PC-9 (cell line): ENCODE measurements at regions of chr11 and their contacts with region 1.

Region 1: DNA sequence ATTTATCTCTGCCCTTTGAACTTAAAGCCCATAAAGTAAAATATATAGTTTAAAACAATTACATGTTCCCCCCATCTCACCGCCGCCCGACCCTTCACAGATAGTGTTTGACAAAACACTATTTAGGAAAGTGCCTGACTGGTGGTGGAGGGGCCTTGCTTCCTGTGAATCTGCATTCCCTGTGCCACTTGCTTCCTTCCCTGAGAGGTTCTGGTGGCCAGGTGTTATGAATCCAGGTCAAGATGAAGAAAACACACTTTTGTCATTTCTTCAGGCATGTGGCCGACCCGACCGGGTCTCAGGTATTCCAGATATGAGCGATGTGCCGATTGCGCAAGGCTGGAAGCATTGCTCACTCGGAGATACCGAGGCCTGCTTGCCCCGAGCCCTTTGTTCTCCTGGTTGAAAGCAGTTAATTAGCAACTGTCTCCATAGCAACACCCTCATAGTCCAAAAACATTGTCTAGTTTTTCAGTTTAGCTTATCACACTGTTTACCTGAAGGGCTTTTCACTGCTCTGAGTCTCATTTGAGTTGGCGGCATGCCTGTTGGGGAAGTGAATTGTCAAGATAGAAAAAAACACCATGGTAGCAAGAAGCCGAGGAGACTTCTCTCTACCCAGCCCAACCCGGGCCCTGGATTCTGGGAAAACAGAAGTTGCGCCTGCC is 128.3 kb downstream of the TEAD1 start:
- DNase-seq: peak; percentile 90 to 98
- H3K4me3 ChIP-seq: peak overlapping the region; percentile 45; the same call in 1 of the 2 replicates
- H3K27ac ChIP-seq: peak overlapping the region; percentile 88
- H3K4me1 ChIP-seq: peaks cover 86% of the 10 kb centered on the region
- H3K27me3 ChIP-seq: no peaks in the 10 kb centered on the region
- CTCF ChIP-seq: no peak

Region 2: DNA sequence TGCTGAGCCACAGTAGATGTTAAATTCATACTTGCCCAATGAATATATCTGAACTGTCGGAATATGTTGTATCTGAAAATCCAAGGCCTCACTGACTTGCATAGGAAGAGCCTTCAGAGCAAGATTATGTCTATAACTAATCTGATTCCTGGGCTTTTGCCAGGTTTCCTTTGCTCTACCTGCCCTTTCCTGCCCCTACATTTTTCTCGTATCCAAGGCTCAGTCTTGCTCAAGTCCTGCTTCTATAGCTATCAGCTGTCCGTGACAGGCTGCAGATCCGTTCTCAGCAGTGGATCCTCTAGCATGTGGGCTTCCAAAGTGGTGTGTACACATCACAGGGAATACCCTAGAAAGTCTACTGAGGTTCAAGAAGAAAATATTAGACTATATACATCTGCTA is 979.6 kb before region 1 on chr11:
- CTCF ChIA-PET with region 1: no interaction called
- POLR2A ChIA-PET with region 1: interaction called, 10 read pairs
- intact Hi-C with region 1: no loop called
- DNase-seq: no peak
- H3K4me3 ChIP-seq: no peak overlapping the region
- H3K27ac ChIP-seq: no peak overlapping the region
- H3K4me1 ChIP-seq: no peaks in the 10 kb centered on the region
- H3K27me3 ChIP-seq: no peaks in the 10 kb centered on the region
- CTCF ChIP-seq: no peak

Region 3: GRCh38 chr11:12680246-12680939 is 122.2 kb before region 1 on chr11:
- CTCF ChIA-PET with region 1: no interaction called
- POLR2A ChIA-PET with region 1: no interaction called
- intact Hi-C with region 1: loop called (anchors 5 kb)
- DNase-seq: peak; percentile 72 to 75
- H3K4me3 ChIP-seq: peak overlapping the region; percentile 94; the same call in 1 of the 2 replicates
- H3K27ac ChIP-seq: peak overlapping the region; percentile 61
- H3K4me1 ChIP-seq: peaks cover 77% of the 10 kb centered on the region
- H3K27me3 ChIP-seq: no peaks in the 10 kb centered on the region
- CTCF ChIP-seq: no peak

Region 4: GRCh38 chr11:12715941-12716340 is 86.6 kb before region 1 on chr11:
- CTCF ChIA-PET with region 1: no interaction called
- POLR2A ChIA-PET with region 1: no interaction called
- intact Hi-C with region 1: no loop called
- DNase-seq: no peak
- H3K4me3 ChIP-seq: no peak overlapping the region
- H3K27ac ChIP-seq: no peak overlapping the region
- H3K4me1 ChIP-seq: peaks cover 16% of the 10 kb centered on the region
- H3K27me3 ChIP-seq: no peaks in the 10 kb centered on the region
- CTCF ChIP-seq: no peak

Region 5: DNA sequence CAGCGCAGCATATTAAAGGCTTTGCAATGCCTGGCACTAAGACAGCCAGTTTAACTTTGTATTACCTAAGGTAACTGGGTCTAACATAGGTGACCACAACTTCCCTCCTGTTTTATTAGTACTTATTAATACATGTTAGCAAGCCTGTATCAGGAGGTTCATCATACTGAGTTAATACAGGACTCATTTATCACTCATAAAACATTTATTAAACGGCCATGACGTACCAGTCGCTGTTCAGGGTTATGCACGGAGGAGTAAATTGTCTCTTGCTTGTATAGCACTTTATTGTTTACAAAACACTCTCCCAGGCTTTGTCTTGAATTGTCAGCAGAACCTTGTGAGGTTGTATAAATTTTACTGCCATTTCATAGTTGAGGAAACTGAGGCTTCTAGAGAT is 72.6 kb before region 1 on chr11:
- CTCF ChIA-PET with region 1: no interaction called
- POLR2A ChIA-PET with region 1: no interaction called
- intact Hi-C with region 1: no loop called
- DNase-seq: no peak
- H3K4me3 ChIP-seq: no peak overlapping the region
- H3K27ac ChIP-seq: no peak overlapping the region
- H3K4me1 ChIP-seq: peaks cover 44% of the 10 kb centered on the region
- H3K27me3 ChIP-seq: no peaks in the 10 kb centered on the region
- CTCF ChIP-seq: no peak

Region 6: DNA sequence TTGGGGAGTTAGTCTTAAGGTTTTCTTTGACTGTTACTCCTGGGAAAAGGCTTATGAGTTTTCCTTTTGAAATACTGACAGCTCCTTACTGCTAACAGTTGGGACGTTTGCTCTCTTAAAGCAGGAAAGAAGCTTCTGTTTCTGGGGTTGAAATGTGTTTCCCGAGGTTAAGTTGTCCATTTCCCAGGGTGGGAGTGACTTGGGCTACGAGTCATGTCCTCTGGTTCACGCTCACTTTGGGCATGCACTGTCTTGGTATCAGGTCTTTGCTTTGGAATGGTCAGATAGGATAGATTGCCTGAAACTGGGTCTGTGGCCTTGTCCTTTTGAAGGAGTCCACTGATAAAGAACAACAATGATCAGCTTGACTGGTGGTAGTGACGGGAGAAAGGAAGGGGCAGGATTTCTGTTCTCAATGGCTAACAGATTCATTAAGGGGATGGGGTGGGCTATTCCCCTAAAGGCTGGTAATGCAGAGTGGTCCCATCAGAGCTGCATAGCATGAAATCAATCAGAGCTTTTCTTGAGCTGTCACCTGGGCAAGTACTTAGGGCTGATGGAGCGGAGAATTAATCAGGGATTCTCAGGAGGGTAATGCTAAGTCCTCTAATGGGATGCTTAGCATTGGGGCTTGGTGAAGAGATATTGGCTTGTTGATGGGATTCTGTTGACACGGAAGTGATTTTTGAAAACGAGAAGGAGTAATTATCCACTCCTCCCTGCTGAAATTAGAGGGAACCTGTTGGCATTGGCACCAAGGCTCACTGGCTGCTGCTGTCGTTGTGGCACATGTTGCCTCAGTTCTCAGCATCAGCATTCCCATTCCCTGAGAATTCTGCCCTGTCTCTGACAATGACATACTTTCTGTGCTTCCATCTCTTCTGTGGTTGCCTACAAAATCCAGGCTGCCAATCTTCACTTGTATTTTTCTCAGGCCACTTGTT is 46.8 kb before region 1 on chr11:
- CTCF ChIA-PET with region 1: no interaction called
- POLR2A ChIA-PET with region 1: no interaction called
- intact Hi-C with region 1: loop called (anchors 10 kb)
- DNase-seq: no peak
- H3K4me3 ChIP-seq: no peak overlapping the region
- H3K27ac ChIP-seq: no peak overlapping the region
- H3K4me1 ChIP-seq: peaks cover 26% of the 10 kb centered on the region
- H3K27me3 ChIP-seq: no peaks in the 10 kb centered on the region
- CTCF ChIP-seq: no peak

Region 7: GRCh38 chr11:12864316-12865156 is 62.0 kb after region 1 on chr11:
- CTCF ChIA-PET with region 1: no interaction called
- POLR2A ChIA-PET with region 1: no interaction called
- intact Hi-C with region 1: loop called (anchors 2 kb)
- DNase-seq: peak; percentile 54 to 67
- H3K4me3 ChIP-seq: no peak overlapping the region
- H3K27ac ChIP-seq: no peak overlapping the region
- H3K4me1 ChIP-seq: no peaks in the 10 kb centered on the region
- H3K27me3 ChIP-seq: no peaks in the 10 kb centered on the region
- CTCF ChIP-seq: no peak